Psoas muscle (tissue), 8 donors: ENCODE measurements at regions of chr17 and their contacts with region 1.

Region 1: GRCh38 chr17:3683054-3683511 is 12.9 kb downstream of the P2RX5 start:
- DNase-seq: no peak
- ATAC-seq: peak; percentile 82 to 93 (median 88)
- H3K4me3 ChIP-seq: no peak overlapping the region
- H3K27ac ChIP-seq: no peak overlapping the region
- H3K4me1 ChIP-seq: no peaks in the 10 kb centered on the region
- H3K27me3 ChIP-seq: no peaks in the 10 kb centered on the region
- CTCF ChIP-seq: peak; percentile 87

Region 2: DNA sequence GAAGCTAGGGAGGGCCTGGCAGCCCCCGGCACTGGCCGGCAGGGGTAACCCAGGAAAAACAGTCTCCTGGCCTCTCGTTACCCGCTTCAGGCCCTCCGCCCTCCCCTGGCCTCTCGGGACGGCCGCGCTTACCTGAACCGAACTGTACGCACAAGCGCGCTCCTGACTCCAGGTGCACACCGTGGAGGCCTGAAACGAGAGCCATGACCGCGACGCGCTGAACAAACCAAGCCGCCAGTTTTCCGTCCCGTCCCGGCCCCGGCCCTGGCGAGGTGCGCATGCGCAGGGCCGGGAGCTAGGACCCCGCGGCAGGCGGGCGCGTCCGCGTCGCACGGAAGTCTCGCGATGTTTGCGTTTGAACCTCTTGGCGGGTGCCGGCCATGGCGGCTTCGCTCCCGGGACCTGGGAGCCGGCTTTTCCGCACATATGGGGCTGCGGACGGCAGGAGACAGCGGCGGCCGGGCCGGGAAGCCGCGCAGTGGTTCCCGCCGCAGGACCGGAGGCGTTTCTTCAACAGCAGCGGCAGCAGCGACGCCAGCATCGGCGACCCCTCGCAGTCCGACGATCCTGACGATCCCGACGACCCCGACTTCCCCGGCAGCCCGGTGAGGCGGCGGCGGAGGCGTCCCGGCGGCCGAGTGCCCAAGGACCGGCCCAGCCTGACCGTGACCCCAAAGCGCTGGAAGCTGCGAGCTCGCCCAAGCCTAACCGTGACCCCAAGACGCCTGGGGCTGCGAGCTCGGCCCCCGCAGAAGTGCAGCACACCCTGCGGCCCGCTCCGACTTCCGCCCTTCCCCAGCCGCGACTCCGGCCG is 40.7 kb after region 1 on chr17 and contains the start of gene HASPIN:
- intact Hi-C with region 1: loop called in 1 of 2 experiments (anchors 5 kb)
- DNase-seq: peak; percentile 90 to 96
- ATAC-seq: peak; percentile 90 to 97 (median 92)
- H3K4me3 ChIP-seq: peak within 1 kb of the TSS; percentile 72
- H3K27ac ChIP-seq: peak within 1 kb of the TSS; percentile 91
- H3K4me1 ChIP-seq: peaks cover 25% of the 10 kb centered on the region
- H3K27me3 ChIP-seq: no peaks in the 10 kb centered on the region
- CTCF ChIP-seq: peak; percentile 26
- total RNA-seq, gene HASPIN: 0.69 to 2.1 (median 0.92) TPM

Region 3: GRCh38 chr17:3732210-3732621 is 49.1 kb after region 1 on chr17:
- intact Hi-C with region 1: loop called in 1 of 2 experiments (anchors 5 kb)
- DNase-seq: no peak
- ATAC-seq: peak; percentile 61 to 83 (median 70)
- H3K4me3 ChIP-seq: no peak overlapping the region
- H3K27ac ChIP-seq: no peak overlapping the region
- H3K4me1 ChIP-seq: no peaks in the 10 kb centered on the region
- H3K27me3 ChIP-seq: no peaks in the 10 kb centered on the region
- CTCF ChIP-seq: no peak

Region 4: GRCh38 chr17:3818786-3819185 is 135.7 kb after region 1 on chr17:
- intact Hi-C with region 1: loop called in 1 of 2 experiments (anchors 5 kb)
- DNase-seq: no peak
- ATAC-seq: no peak
- H3K4me3 ChIP-seq: no peak overlapping the region
- H3K27ac ChIP-seq: no peak overlapping the region
- H3K4me1 ChIP-seq: peaks cover 17% of the 10 kb centered on the region
- H3K27me3 ChIP-seq: no peaks in the 10 kb centered on the region
- CTCF ChIP-seq: no peak